Thyroid gland (tissue), 4 donors: ENCODE measurements at regions of chr3 and their contacts with region 1.

Region 1: DNA sequence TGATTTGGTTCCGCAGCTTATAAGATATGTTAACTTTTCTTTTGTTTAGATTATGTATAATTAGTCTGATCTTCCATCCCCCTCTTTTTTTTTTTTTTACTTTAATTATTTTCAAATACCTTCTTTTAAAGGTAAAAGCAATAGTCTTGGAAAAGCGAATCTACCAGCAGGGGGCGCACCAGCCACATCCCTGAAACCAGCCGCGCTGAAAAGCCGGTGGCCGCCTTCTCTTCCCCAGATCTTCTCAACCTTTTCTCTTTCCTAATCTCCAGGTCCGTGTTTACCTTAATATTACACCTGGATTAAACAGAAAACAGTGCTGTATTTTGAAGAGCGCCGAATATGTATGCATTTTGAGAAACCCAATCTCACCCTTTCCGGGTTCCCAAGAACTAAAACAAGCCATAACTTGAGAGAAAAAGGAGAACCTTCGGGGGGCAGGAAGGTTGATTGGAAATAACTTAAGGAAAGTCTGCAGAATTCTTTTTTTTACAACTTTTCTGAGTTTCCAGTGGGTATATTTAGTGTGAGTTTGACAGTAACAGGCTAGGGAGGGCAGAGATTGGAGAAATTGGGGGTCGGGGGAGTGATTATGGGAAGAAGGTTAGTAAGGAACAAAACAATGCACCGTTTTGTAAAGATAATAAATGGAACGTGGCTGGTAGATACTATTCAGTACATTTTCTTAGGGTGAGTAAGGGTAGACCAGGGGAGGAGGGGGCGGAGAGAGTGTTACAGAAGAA is 2.0 kb upstream of the SOX2 start:
- DNase-seq: peak; percentile 82 to 84
- H3K4me3 ChIP-seq: no peak overlapping the region
- H3K27ac ChIP-seq: no peak overlapping the region
- H3K4me1 ChIP-seq: peaks cover 0 to 22% of the 10 kb centered on the region in 2 donors
- H3K27me3 ChIP-seq: peaks cover 71% of the 10 kb centered on the region
- CTCF ChIP-seq: peak; percentile 59 to 84 (median 73)
- POLR2A ChIP-seq: no peak

Region 2: DNA sequence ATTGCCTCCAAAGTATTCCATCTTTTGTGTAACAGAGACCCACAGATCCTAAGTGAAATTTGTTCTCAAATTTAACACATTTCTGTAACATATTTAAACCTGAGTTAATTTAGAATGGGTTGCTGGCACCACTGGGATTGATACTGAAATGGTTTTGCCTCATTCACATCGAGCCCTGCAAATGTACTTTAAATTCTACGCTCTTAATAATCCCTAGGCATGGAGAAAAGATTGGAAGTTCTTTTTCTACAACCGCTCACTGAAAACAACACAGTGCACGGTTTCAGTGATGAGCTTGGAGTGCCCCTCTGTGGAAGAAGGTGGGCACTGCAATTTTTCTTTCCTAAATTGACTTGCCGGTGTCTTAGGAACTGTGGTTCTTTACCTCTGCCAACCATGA is 973.7 kb after region 1 on chr3:
- intact Hi-C with region 1: loop called (anchors 10 kb)
- DNase-seq: peak; percentile 59 to 60
- H3K4me3 ChIP-seq: no peak overlapping the region
- H3K27ac ChIP-seq: no peak overlapping the region
- H3K4me1 ChIP-seq: peaks cover 0 to 15% of the 10 kb centered on the region in 2 donors
- H3K27me3 ChIP-seq: no peaks in the 10 kb centered on the region
- CTCF ChIP-seq: peak; percentile 74 to 88 (median 82)
- POLR2A ChIP-seq: no peak